ENCODE measurements at regions of chr6 and their contacts with region 1.

Region 1: DNA sequence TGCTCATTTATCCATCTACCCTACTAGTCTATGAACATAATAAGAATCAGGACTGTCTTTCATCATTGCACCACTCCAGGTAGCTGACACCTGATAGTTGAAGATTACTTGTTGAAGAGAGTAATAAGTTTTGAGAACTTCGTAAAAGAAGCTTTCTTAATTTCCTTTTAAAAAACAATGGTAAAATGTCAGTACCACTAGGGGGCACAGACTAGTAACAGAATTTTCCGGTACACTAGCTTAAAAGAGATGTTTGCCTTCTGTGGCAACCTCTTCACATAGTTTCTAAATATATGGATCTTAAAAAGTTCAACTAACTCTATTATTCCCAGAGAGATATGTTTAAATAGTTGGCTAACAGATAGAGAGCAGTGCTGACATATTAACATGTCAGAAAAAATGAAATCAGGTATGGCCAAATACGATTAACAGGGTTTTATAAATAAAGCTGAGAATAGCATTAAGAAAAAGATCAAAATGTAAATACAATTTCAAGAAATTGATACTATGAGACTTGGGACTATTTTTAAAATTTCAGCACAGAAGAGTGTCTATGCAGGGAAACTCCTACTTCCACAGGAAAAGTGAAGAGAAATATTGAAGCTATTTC is 5.4 kb upstream of the KCNQ5 start:
- DNase-seq: peak; percentile 34
- CTCF ChIP-seq: peak; percentile 67

Region 2: GRCh38 chr6:72595812-72596211 is 20.7 kb before region 1 on chr6:
- CTCF ChIA-PET with region 1: interaction called, 14 read pairs
- POLR2A ChIA-PET with region 1: no interaction called
- DNase-seq: no peak
- CTCF ChIP-seq: no peak

Region 3: DNA sequence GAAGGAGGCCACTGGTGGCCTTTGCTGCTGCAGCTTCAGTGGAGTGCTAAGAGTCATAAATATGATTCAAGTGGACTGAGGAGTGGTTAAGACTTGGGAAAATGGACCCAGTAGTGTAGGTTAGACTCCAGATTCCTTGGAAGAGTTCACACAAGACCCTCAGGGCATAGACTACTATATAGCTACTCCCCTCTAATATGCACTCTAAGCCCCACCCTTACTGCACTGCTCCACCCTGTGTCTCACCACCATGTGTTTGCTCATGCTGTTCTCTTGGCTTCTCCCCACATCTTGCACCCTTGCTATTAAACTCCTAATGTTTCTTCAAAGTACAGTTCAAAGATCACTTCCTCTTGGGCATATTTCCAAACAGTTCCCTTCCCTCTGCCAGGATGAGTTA is 11.0 kb after region 1 on chr6:
- CTCF ChIA-PET with region 1: interaction called, 13 read pairs
- POLR2A ChIA-PET with region 1: no interaction called
- DNase-seq: no peak
- CTCF ChIP-seq: no peak

Region 4: GRCh38 chr6:72636215-72636614 is 19.7 kb after region 1 on chr6:
- CTCF ChIA-PET with region 1: interaction called, 15 read pairs
- POLR2A ChIA-PET with region 1: no interaction called
- DNase-seq: peak; percentile 17
- CTCF ChIP-seq: no peak

Region 5: GRCh38 chr6:72649032-72649984 is 32.8 kb after region 1 on chr6:
- CTCF ChIA-PET with region 1: interaction called, 12 read pairs
- POLR2A ChIA-PET with region 1: interaction called, 3 read pairs
- DNase-seq: no peak
- CTCF ChIP-seq: no peak

Region 6: DNA sequence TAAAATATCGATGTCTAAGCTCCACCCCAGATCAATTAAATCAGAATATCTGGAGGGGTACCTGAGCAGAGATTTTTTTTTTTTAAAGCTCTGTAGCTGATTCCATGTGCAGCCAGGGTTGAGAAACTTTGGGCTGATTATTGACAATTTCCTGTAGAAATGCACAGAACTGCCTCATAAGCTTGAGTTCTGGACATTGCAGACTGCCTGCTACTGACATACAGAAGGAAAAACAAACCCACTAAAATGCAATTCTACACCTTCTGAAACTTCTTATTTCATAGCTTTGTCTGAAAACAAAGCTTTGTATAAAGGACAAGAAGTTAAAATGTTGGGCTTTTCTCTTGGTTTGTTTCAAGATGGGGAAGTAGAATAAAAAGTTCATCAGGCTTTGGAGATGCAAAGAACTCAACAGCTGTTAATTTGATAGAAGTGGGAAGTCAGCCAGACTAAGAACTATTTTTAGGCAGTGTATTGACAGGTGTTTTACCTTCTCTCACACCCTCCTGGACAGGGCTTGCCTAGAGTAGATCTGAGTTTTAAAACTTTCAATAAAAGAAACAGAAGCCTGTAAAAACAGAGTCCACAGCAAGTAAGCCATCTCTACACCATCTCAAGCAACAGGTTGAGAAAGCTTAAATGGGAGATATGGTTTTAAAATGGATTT is 153.1 kb after region 1 on chr6:
- CTCF ChIA-PET with region 1: no interaction called
- POLR2A ChIA-PET with region 1: no interaction called
- DNase-seq: peak; percentile 8
- CTCF ChIP-seq: no peak

Region 7: DNA sequence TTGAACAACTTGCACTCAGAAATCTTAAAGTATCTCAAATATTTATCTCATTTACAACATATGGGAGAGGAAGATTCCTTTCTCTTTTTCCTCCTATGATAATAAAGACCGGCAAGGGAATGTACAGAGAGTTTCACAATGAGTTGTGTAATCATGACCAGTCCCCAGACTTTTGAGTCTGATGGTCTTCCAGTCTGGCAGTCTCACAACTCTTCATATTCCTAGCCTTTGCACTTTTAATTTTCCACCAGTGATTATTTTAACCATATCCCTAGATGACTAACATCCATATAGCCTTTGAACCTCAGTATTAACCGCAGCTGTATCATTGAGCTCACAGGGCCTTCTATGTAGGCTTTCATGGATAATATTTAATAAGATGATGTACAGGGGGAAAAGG is 330.3 kb after region 1 on chr6:
- CTCF ChIA-PET with region 1: no interaction called
- POLR2A ChIA-PET with region 1: no interaction called
- DNase-seq: no peak
- CTCF ChIP-seq: no peak

Region 8: DNA sequence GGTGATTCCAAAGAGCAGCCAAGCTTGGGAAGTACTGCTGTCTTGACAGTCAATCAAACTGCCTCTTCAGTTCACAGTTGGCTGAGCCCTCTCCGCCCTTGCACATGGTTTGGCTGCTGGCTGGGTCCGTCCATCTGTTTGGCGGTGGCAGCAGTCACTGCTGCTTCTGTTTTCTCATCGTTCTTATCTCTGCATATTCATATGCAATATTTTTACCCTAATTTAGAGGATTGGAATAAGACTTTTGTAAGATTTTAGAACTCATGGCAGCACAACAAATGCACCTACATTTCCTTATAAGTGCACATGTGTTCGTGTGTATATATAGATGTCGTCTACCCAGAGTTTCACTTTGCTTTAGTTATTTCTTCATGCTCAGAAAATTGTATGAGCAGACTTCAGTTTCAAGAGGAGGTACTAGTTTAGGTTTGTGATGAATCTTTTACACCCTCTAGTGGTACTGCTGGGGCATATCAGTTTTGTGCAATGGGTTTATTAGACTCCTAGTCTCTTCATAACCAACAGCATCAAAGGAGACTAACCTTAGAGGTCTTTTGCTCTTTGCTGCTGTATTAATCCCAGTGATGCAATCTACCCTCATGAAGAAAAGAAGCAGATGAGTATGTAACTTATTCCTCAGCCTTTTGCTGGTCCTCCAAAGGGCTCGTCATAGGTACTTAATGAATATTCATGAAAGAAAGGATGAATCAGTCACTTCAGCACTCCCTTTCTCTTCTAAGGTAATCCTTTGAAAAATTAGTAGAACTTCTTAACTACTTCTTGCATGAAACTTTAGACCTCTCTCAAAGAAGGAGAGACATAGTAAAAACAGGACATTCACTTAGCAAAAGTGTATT is 564.5 kb after region 1 on chr6:
- CTCF ChIA-PET with region 1: interaction called, 13 read pairs
- POLR2A ChIA-PET with region 1: no interaction called
- DNase-seq: peak; percentile 56
- CTCF ChIP-seq: peak; percentile 83

Region 9: DNA sequence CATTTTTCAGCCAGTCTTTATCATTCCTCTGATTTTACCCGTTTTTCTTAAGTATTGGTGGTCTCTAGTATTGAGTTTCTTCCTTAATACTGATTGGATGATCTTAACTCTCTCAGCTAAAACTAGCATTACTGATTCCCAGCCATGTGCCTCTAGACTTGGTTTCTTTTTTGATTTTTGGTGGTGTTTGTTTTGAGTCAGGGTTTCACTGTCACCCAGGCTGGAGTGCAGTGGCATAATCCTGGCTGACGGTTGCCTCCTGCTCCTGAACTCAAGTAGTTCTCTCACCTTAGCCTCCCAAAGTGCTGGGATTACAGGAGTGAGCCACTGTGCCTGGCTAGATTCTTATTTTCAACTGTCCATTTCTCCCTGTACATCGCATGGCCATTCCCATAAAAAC is 712.7 kb after region 1 on chr6:
- CTCF ChIA-PET with region 1: interaction called, 23 read pairs
- POLR2A ChIA-PET with region 1: no interaction called
- DNase-seq: no peak
- CTCF ChIP-seq: no peak

Measured in GM10248 (cell line).